ENCODE measurements at regions of chr11 and their contacts with region 1.

Region 1: GRCh38 chr11:44911029-44911814 is 39.5 kb downstream of the TP53I11 start:
- DNase-seq: peak; percentile 86
- H3K4me3 ChIP-seq: peak overlapping the region in 1 of 8 donors; percentile 13
- H3K27ac ChIP-seq: peak overlapping the region in 1 of 8 donors; percentile 30
- H3K4me1 ChIP-seq: peaks cover 24 to 57% (median 38%) of the 10 kb centered on the region in 6 donors
- H3K27me3 ChIP-seq: peaks cover 0 to 5% (median 0%) of the 10 kb centered on the region in 7 donors
- CTCF ChIP-seq: peak; percentile 56 to 93 (median 88)
- POLR2A ChIP-seq: no peak

Region 2: GRCh38 chr11:44556735-44557409 is 354.4 kb before region 1 on chr11:
- intact Hi-C with region 1: loop called (anchors 5 kb)
- DNase-seq: peak; percentile 88
- H3K4me3 ChIP-seq: no peak overlapping the region
- H3K27ac ChIP-seq: peak overlapping the region in 7 of 8 donors; percentile 20 to 81 (median 60)
- H3K4me1 ChIP-seq: peaks cover 15 to 69% (median 37%) of the 10 kb centered on the region in 6 donors
- H3K27me3 ChIP-seq: no peaks in the 10 kb centered on the region
- CTCF ChIP-seq: peak; percentile 64 to 89 (median 77)
- POLR2A ChIP-seq: no peak

Region 3: GRCh38 chr11:44621140-44621681 is 290.0 kb before region 1 on chr11:
- intact Hi-C with region 1: loop called (anchors 5 kb)
- DNase-seq: peak; percentile 91
- H3K4me3 ChIP-seq: no peak overlapping the region
- H3K27ac ChIP-seq: no peak overlapping the region
- H3K4me1 ChIP-seq: peaks cover 20 to 67% (median 41%) of the 10 kb centered on the region in 6 donors
- H3K27me3 ChIP-seq: no peaks in the 10 kb centered on the region
- CTCF ChIP-seq: peak; percentile 63 to 96 (median 88)
- POLR2A ChIP-seq: no peak

Region 4: GRCh38 chr11:44727373-44728287 is 183.6 kb before region 1 on chr11:
- intact Hi-C with region 1: loop called (anchors 5 kb)
- DNase-seq: peak; percentile 94
- H3K4me3 ChIP-seq: peak overlapping the region; percentile 57 to 84 (median 60)
- H3K27ac ChIP-seq: peak overlapping the region in 7 of 8 donors; percentile 1 to 77 (median 62)
- H3K4me1 ChIP-seq: peaks cover 15 to 63% (median 48%) of the 10 kb centered on the region in 6 donors
- H3K27me3 ChIP-seq: peaks cover 0 to 45% (median 14%) of the 10 kb centered on the region in 7 donors
- CTCF ChIP-seq: peak; percentile 50 to 97 (median 93)
- POLR2A ChIP-seq: no peak

Measured in spleen (tissue), 13 donors.